ENCODE measurements at regions of chr9 and their contacts with region 1.

Region 1: GRCh38 chr9:95510709-95511615 is 5.8 kb downstream of the PTCH1 start:
- DNase-seq: peak; percentile 93
- ATAC-seq: peak; percentile 78

Region 2: GRCh38 chr9:95317119-95317892 is 193.7 kb before region 1 on chr9 and contains the start of gene FANCC:
- intact Hi-C with region 1: loop called (anchors 10 kb)
- DNase-seq: peak; percentile 97
- ATAC-seq: peak; percentile 98
- total RNA-seq, gene FANCC: 4.6 TPM

Region 3: GRCh38 chr9:96009690-96010472 is 498.9 kb after region 1 on chr9:
- intact Hi-C with region 1: no loop called
- DNase-seq: no peak
- ATAC-seq: peak; percentile 78

Region 4: DNA sequence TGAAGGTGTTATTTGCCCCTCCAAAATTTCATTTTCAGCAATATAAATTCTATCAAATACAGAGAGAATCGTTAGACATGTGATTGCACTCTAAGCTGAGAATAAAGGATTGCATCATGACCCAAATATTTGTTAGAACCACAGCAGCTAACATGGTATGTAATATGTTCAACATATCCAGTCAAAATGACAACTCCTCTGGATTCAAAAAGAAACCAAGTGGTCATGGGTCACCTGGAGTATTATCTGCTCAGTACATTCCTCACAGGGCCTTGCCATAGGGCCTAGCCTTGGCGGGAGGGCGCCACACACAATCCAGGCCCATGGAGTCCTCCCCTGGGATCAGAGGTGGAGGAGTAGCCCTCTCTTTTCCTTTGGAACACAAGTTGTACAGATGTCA is 611.8 kb after region 1 on chr9:
- intact Hi-C with region 1: no loop called
- DNase-seq: no peak
- ATAC-seq: no peak

Measured in Right ventricle myocardium superior (tissue), 1 donor.